Activated naive CD4-positive, alpha-beta T cell treated with anti-CD3 and anti-CD28 coated beads for 36 hours (primary cell): ENCODE measurements at regions of chr3 and their contacts with region 1.

Region 1: DNA sequence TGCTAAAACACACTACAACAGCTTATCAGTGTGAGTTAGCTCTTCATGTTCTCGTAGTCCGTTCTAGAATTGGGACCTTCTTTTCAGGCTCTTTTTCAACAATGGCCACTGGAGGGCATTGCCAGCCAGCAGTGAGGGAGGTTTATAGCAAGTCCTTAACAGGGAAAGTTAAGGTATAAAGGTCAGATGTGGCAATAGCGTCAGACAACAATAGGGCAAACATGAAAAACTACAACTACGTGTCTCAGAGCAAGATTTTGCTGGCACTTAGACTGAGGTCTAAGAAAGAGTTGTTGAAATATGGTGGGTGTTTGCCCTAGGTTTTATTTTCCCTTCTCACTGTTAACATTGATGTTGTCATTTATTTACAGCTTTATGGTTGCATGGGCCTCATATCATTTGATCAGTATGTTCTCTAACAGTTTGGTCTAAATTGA is 161.4 kb downstream of the GMNC start:
- DNase-seq: peak; percentile 34
- H3K4me3 Mint-ChIP-seq: no peak overlapping the region
- H3K27ac Mint-ChIP-seq: no peak overlapping the region
- H3K4me1 Mint-ChIP-seq: no peaks in the 10 kb centered on the region
- H3K27me3 Mint-ChIP-seq: peaks cover 37% of the 10 kb centered on the region

Region 2: DNA sequence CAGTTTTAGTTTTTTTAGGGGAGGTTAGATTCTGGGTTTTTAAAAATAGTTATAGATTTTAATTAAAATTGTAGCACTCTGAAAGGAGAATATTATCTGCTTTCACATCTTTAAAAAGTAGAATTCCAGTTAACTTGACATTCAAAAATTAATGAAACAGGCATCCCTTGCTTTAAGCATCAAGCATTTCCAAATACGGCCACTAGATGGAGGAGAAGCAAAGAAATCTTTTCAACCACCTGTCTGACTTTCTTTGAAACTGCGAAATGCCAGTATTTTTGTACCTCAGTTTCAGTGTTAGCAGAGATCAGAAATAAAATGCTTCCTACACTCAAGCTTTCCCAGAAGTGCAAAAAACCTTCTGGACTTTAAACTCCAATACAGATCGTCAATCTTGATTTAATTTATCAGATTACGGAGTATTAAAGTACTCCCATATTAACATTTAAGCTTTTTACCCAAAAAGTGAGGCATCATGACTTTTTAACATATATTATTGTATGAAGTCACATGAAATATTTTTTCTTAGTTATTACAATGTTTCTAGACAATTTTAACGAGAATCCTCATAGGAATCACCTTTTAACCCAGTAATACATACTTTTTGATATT is 733.8 kb before region 1 on chr3:
- CTCF ChIA-PET with region 1: interaction called, 3 read pairs
- intact Hi-C with region 1: loop called (anchors 2 kb)
- DNase-seq: peak; percentile 28
- H3K4me3 Mint-ChIP-seq: no peak overlapping the region
- H3K27ac Mint-ChIP-seq: no peak overlapping the region
- H3K4me1 Mint-ChIP-seq: no peaks in the 10 kb centered on the region
- H3K27me3 Mint-ChIP-seq: peaks cover 3% of the 10 kb centered on the region

Region 3: GRCh38 chr3:190384241-190384863 is 316.8 kb before region 1 on chr3:
- CTCF ChIA-PET with region 1: no interaction called
- intact Hi-C with region 1: loop called (anchors 1 kb)
- DNase-seq: peak; percentile 48
- H3K4me3 Mint-ChIP-seq: no peak overlapping the region
- H3K27ac Mint-ChIP-seq: no peak overlapping the region
- H3K4me1 Mint-ChIP-seq: peaks cover 8% of the 10 kb centered on the region
- H3K27me3 Mint-ChIP-seq: peaks cover 5% of the 10 kb centered on the region

Region 4: GRCh38 chr3:190513409-190514162 is 187.5 kb before region 1 on chr3 and contains the start of gene IL1RAP:
- CTCF ChIA-PET with region 1: interaction called, 5 read pairs
- intact Hi-C with region 1: loop called (anchors 2 kb)
- DNase-seq: peak; percentile 87
- H3K4me3 Mint-ChIP-seq: peak within 1 kb of the TSS; percentile 77
- H3K27ac Mint-ChIP-seq: peak within 1 kb of the TSS; percentile 76
- H3K4me1 Mint-ChIP-seq: peaks cover 30% of the 10 kb centered on the region
- H3K27me3 Mint-ChIP-seq: no peaks in the 10 kb centered on the region
- total RNA-seq, gene IL1RAP: 11.0 to 13.7 TPM

Region 5: GRCh38 chr3:190585805-190586630 is 115.1 kb before region 1 on chr3:
- CTCF ChIA-PET with region 1: interaction called, 3 read pairs
- intact Hi-C with region 1: loop called (anchors 1 kb)
- DNase-seq: peak; percentile 78
- H3K4me3 Mint-ChIP-seq: peak overlapping the region; percentile 50
- H3K27ac Mint-ChIP-seq: peak overlapping the region; percentile 88
- H3K4me1 Mint-ChIP-seq: peaks cover 37% of the 10 kb centered on the region
- H3K27me3 Mint-ChIP-seq: no peaks in the 10 kb centered on the region

Region 6: GRCh38 chr3:192444096-192444790 is 1743.1 kb after region 1 on chr3:
- CTCF ChIA-PET with region 1: no interaction called
- intact Hi-C with region 1: loop called (anchors 10 kb)
- DNase-seq: peak; percentile 69
- H3K4me3 Mint-ChIP-seq: no peak overlapping the region
- H3K27ac Mint-ChIP-seq: no peak overlapping the region
- H3K4me1 Mint-ChIP-seq: no peaks in the 10 kb centered on the region
- H3K27me3 Mint-ChIP-seq: peaks cover 34% of the 10 kb centered on the region